ENCODE measurements at regions of chr2 and their contacts with region 1.

Region 1: DNA sequence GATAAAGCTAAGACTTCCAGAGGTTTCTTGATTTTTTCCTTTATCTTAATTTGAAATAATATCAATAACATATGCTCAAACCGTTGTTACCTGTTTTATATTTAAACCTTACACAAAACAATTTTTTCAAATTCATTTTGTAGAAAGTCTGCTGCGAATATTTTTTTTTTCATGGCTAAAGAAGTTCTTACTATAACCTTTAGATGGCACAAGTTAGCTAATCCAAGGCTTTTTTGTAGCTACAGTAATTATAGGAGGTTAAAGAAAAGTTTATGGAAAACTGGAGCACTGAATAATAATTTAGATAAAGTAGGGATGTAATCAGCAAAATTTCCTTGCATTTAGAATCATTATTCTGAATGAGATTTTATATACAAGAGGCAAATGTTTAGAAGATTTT is 78.0 kb upstream of the PNPT1 start:
- DNase-seq: peak; percentile 56
- H3K4me3 Mint-ChIP-seq: no peak overlapping the region
- H3K27ac Mint-ChIP-seq: peak overlapping the region; percentile 35
- H3K4me1 Mint-ChIP-seq: peaks cover 51% of the 10 kb centered on the region
- H3K27me3 Mint-ChIP-seq: no peaks in the 10 kb centered on the region
- CTCF ChIP-seq: peak; percentile 66

Region 2: GRCh38 chr2:55761526-55761925 is 10.1 kb before region 1 on chr2:
- CTCF ChIA-PET with region 1: interaction called, 7 read pairs
- POLR2A ChIA-PET with region 1: interaction called, 31 read pairs
- intact Hi-C with region 1: no loop called
- DNase-seq: peak; percentile 83
- H3K4me3 Mint-ChIP-seq: peak overlapping the region; percentile 42
- H3K27ac Mint-ChIP-seq: peak overlapping the region; percentile 80
- H3K4me1 Mint-ChIP-seq: peaks cover 30% of the 10 kb centered on the region
- H3K27me3 Mint-ChIP-seq: no peaks in the 10 kb centered on the region
- CTCF ChIP-seq: no peak

Region 3: DNA sequence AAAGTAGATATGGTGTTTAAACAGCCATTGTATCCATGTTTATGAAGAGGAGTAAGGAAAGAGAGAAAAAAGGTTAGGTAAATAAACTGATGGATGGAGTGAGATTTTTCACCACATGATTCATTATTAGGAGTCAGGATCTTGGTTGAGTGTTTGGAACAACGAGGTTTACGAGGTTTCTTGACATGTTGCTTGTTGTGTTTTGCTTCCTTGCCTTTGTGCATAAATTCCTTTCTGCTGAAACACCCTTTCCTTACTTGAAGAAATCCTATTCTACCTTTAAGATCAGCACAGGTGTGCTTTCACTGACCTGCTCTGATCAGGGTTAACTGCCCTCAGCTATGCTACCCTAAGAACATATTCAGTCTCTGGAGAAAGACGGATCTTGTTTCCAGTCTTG is 85.3 kb after region 1 on chr2:
- CTCF ChIA-PET with region 1: interaction called, 14 read pairs
- POLR2A ChIA-PET with region 1: interaction called, 28 read pairs
- intact Hi-C with region 1: loop called (anchors 1 kb)
- DNase-seq: peak; percentile 44
- H3K4me3 Mint-ChIP-seq: no peak overlapping the region
- H3K27ac Mint-ChIP-seq: peak overlapping the region; percentile 59
- H3K4me1 Mint-ChIP-seq: peaks cover 38% of the 10 kb centered on the region
- H3K27me3 Mint-ChIP-seq: no peaks in the 10 kb centered on the region
- CTCF ChIP-seq: no peak

Region 4: DNA sequence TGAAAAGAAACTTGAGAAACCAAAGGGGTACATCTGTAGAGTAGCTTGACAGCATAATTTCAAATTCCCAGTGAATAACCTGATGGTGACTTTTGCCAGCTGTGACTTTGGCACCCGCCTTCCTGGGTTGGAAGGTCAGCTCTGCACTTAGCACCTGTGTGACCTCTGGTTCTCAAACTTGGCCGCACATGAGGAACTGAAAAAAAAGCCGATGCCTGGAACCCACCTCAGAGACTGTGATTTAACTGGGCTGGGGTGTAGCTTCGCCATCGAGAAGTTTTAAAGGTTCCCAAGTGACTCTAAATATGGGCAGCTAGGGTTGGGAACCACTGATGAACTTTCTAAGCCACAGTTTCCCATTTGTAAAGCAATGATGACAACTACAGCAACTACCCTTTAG is 145.5 kb after region 1 on chr2:
- CTCF ChIA-PET with region 1: interaction called, 15 read pairs
- POLR2A ChIA-PET with region 1: interaction called, 3 read pairs
- intact Hi-C with region 1: no loop called
- DNase-seq: no peak
- H3K4me3 Mint-ChIP-seq: no peak overlapping the region
- H3K27ac Mint-ChIP-seq: no peak overlapping the region
- H3K4me1 Mint-ChIP-seq: peaks cover 10% of the 10 kb centered on the region
- H3K27me3 Mint-ChIP-seq: no peaks in the 10 kb centered on the region
- CTCF ChIP-seq: no peak

Region 5: DNA sequence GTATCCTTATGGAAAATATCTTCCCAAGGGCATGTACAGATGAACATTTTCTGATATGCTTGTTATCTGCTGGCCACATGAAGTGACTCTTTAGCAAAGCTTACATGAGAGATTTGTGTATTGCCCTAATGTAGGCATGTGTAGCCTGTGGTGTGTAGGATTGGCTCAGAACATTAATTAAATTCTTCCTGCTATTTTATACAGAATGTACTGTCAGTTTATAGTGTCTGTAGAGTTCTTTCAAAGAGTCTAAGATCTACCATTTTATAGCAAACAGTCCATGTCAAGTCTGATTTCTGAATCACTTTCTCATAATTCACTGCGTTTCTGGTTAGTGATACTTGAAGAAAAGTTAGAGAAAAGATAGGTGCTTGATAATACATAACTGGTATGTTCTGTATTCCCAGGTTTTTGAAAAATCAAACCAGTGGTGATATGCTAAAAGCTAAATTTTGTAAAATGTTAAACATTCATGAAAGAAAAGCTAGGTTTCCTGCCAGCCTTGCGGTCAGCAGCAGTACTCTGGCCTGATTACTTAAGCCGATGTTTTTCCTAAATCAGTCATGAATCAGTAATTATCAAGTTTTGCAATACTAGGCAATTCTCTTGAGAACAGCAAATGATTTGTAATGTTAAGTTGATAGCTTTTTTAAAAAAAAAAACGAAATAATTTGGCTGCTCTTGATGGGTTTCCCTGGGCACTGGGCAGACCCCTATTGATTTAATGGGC is 182.9 kb after region 1 on chr2:
- CTCF ChIA-PET with region 1: interaction called, 204 read pairs
- POLR2A ChIA-PET with region 1: interaction called, 26 read pairs
- intact Hi-C with region 1: no loop called
- DNase-seq: peak; percentile 69
- H3K4me3 Mint-ChIP-seq: no peak overlapping the region
- H3K27ac Mint-ChIP-seq: no peak overlapping the region
- H3K4me1 Mint-ChIP-seq: peaks cover 20% of the 10 kb centered on the region
- H3K27me3 Mint-ChIP-seq: no peaks in the 10 kb centered on the region
- CTCF ChIP-seq: no peak

Region 6: DNA sequence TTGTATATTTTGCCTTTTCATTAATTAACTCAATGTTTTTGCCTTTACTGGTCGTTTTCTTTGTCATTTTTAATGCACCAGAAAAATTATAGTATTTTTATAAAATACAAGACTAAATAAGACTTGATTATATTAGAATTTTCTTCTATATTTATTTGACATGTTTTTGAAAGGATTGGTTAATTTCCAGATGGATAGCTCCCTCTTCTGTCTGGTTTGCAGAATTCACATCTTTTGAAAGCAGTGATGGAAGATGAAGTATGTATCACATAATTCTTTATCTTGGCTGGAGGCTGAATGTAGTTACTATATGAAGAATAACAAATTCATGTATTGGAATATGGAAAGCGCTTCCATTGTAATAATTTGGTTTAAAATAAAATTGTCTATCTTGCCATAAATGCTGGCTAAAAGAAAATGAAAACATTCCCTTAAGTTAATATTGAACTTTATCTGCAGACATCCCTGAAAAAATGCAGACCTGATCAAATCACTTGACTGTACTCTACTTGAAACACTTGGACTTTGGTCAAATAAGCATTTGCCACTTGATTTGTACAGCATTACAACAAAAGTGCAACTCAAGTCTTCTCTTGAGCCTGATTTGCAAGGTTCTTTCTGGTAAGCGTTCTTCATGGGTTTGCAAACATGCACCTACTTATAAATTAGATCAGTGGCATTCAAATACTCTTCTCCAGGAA is 238.3 kb after region 1 on chr2:
- CTCF ChIA-PET with region 1: interaction called, 14 read pairs
- POLR2A ChIA-PET with region 1: interaction called, 4 read pairs
- intact Hi-C with region 1: loop called (anchors 1 kb)
- DNase-seq: peak; percentile 60
- H3K4me3 Mint-ChIP-seq: no peak overlapping the region
- H3K27ac Mint-ChIP-seq: no peak overlapping the region
- H3K4me1 Mint-ChIP-seq: peaks cover 5% of the 10 kb centered on the region
- H3K27me3 Mint-ChIP-seq: no peaks in the 10 kb centered on the region
- CTCF ChIP-seq: peak; percentile 68